ENCODE measurements at regions of chr7 and their contacts with region 1.

Region 1: GRCh38 chr7:130277763-130278643 is 11.3 kb downstream of the CPA2 start:
- DNase-seq: peak; percentile 77
- H3K4me3 ChIP-seq: no peak overlapping the region
- H3K27ac ChIP-seq: peak overlapping the region in 1 of 2 experiments; percentile 8; a peak in 1 of 4 replicates
- H3K4me1 ChIP-seq: peaks cover 3 to 13% of the 10 kb centered on the region in 2 experiments; a peak in 3 of 4 replicates
- H3K27me3 ChIP-seq: no peaks in the 10 kb centered on the region
- CTCF ChIP-seq: peak; percentile 73
- EP300 ChIP-seq: no peak
- RAD21 ChIP-seq: peak; percentile 79

Region 2: GRCh38 chr7:130254555-130254954 is 23.4 kb before region 1 on chr7:
- CTCF ChIA-PET with region 1: interaction called, 12 read pairs
- POLR2A ChIA-PET with region 1: no interaction called
- DNase-seq: no peak
- H3K4me3 ChIP-seq: no peak overlapping the region
- H3K27ac ChIP-seq: no peak overlapping the region
- H3K4me1 ChIP-seq: no peaks in the 10 kb centered on the region
- H3K27me3 ChIP-seq: no peaks in the 10 kb centered on the region
- CTCF ChIP-seq: no peak
- EP300 ChIP-seq: no peak
- RAD21 ChIP-seq: no peak

Region 3: GRCh38 chr7:130263130-130263529 is 14.9 kb before region 1 on chr7:
- CTCF ChIA-PET with region 1: interaction called, 17 read pairs
- POLR2A ChIA-PET with region 1: no interaction called
- DNase-seq: no peak
- H3K4me3 ChIP-seq: no peak overlapping the region
- H3K27ac ChIP-seq: no peak overlapping the region
- H3K4me1 ChIP-seq: no peaks in the 10 kb centered on the region
- H3K27me3 ChIP-seq: no peaks in the 10 kb centered on the region
- CTCF ChIP-seq: no peak
- EP300 ChIP-seq: no peak
- RAD21 ChIP-seq: no peak

Region 4: GRCh38 chr7:130292682-130293257 is 14.8 kb after region 1 on chr7 and contains the start of gene CPA4:
- CTCF ChIA-PET with region 1: interaction called, 21 read pairs
- POLR2A ChIA-PET with region 1: no interaction called
- DNase-seq: no peak
- H3K4me3 ChIP-seq: peak within 1 kb of the TSS; percentile 33 to 42; a peak in 3 of 4 replicates
- H3K27ac ChIP-seq: peak within 1 kb of the TSS; percentile 56 to 84; a peak in 3 of 4 replicates
- H3K4me1 ChIP-seq: peaks cover 5 to 15% of the 10 kb centered on the region in 2 experiments; a peak in 2 of 4 replicates
- H3K27me3 ChIP-seq: no peaks in the 10 kb centered on the region
- CTCF ChIP-seq: no peak
- EP300 ChIP-seq: peak in 1 of 2 experiments; percentile 99; a peak in 2 of 4 replicates
- RAD21 ChIP-seq: no peak
- polyA plus RNA-seq, gene CPA4: 176 and 243 TPM in 2 replicates

Region 5: GRCh38 chr7:130384371-130384801 is 106.4 kb after region 1 on chr7:
- CTCF ChIA-PET with region 1: no interaction called
- POLR2A ChIA-PET with region 1: no interaction called
- DNase-seq: no peak
- H3K4me3 ChIP-seq: no peak overlapping the region
- H3K27ac ChIP-seq: no peak overlapping the region
- H3K4me1 ChIP-seq: peaks cover 0 to 18% of the 10 kb centered on the region in 2 experiments; a peak in 1 of 4 replicates
- H3K27me3 ChIP-seq: no peaks in the 10 kb centered on the region
- CTCF ChIP-seq: no peak
- EP300 ChIP-seq: no peak
- RAD21 ChIP-seq: no peak